HCT116 (cell line): ENCODE measurements at regions of chr7 and their contacts with region 1.

Region 1: GRCh38 chr7:31122649-31123058 is 70.5 kb downstream of the ADCYAP1R1 start:
- DNase-seq: peak; percentile 79
- ATAC-seq: peak; percentile 84
- H3K4me3 ChIP-seq: no peak overlapping the region
- H3K27ac ChIP-seq: no peak overlapping the region
- H3K4me1 ChIP-seq: 0 out of 4 replicates have a peak, but pooled peaks cover 0 to 4% of the 10 kb centered on the region in 2 experiments
- H3K27me3 ChIP-seq: peaks cover 22% of the 10 kb centered on the region
- CTCF ChIP-seq: peak; percentile 75 to 93 (median 84)
- POLR2A ChIP-seq: no peak
- RAD21 ChIP-seq: peak; percentile 92

Region 2: DNA sequence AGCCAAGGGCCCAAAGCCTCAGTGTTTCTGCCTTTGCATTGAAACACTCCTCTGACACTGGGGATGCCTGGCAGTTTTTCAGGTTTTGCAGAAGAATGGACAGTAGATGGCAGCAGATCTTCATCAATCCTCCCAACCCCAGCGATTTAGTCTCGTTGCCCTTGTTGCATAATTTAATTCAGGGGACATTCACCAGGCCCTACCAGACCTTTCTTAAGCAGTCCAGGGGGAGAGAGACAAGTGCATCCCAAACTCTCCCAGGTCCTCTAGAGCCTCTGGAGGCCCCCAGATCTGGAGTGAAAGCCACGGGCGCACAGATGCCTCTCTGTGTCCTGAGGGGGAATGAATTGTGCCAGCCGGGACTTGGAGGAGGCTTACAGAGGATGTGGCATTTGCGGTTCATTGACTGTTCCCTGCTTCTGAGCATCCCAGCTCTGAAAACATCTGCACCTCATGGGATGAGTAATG is 321.8 kb before region 1 on chr7:
- CTCF ChIA-PET with region 1: interaction called, 7 read pairs
- POLR2A ChIA-PET with region 1: interaction called, 3 read pairs
- RAD21 ChIA-PET with region 1: no interaction called
- intact Hi-C with region 1: loop called (anchors 2 kb)
- DNase-seq: peak; percentile 29
- ATAC-seq: peak; percentile 83
- H3K4me3 ChIP-seq: no peak overlapping the region
- H3K27ac ChIP-seq: no peak overlapping the region
- H3K4me1 ChIP-seq: peaks cover 0 to 12% of the 10 kb centered on the region in 2 experiments; a peak in 3 of 4 replicates
- H3K27me3 ChIP-seq: no peaks in the 10 kb centered on the region
- CTCF ChIP-seq: peak; percentile 66 to 77 (median 73)
- POLR2A ChIP-seq: no peak
- RAD21 ChIP-seq: peak; percentile 90

Region 3: DNA sequence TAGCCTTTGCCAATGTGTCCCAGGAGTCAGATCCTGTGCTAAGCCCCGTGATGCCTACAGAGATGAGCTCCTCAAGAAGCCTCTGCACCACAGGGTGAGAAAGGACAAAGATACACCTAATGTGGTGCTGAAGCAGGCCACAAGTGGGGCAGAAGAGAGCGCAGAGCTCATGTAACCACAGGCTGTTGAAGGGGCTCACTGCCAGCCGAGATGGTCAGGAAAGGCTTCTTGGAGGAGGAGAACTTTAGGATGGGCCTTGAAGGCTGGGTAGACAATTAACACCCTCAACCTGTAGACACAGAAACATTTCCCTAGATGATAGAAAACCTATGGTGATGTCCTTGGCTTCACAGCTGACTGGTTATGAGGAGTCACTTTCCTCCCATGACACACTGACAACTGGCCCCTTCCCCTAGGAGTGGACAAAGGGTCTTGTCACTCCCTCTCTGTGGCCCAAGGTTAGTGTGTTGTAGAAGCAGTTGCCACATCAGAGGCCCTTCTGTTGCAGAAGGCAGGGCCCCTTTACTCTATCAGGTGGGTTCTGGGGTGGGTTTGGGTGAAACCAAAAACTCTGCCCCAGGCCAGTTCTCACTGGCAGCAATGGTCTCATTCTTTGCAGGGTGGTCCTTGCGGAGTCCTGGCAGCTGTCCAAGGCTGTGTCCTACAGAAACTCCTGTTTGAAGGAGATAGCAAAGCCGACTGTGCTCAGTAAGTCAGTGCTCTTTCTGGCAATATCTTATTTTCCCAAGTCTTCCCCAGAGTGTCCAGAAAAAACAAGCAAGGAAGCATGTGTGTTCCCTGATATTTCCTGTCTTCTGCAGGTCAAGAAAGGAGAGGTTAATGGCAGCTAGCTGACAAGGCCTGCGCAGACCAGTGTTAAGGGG is 282.3 kb before region 1 on chr7:
- CTCF ChIA-PET with region 1: no interaction called
- POLR2A ChIA-PET with region 1: no interaction called
- RAD21 ChIA-PET with region 1: no interaction called
- intact Hi-C with region 1: no loop called
- DNase-seq: no peak
- ATAC-seq: no peak
- H3K4me3 ChIP-seq: no peak overlapping the region
- H3K27ac ChIP-seq: no peak overlapping the region
- H3K4me1 ChIP-seq: peaks cover 1% of the 10 kb centered on the region in 2 experiments; a peak in 3 of 4 replicates
- H3K27me3 ChIP-seq: no peaks in the 10 kb centered on the region
- CTCF ChIP-seq: no peak
- POLR2A ChIP-seq: no peak
- RAD21 ChIP-seq: no peak

Region 4: DNA sequence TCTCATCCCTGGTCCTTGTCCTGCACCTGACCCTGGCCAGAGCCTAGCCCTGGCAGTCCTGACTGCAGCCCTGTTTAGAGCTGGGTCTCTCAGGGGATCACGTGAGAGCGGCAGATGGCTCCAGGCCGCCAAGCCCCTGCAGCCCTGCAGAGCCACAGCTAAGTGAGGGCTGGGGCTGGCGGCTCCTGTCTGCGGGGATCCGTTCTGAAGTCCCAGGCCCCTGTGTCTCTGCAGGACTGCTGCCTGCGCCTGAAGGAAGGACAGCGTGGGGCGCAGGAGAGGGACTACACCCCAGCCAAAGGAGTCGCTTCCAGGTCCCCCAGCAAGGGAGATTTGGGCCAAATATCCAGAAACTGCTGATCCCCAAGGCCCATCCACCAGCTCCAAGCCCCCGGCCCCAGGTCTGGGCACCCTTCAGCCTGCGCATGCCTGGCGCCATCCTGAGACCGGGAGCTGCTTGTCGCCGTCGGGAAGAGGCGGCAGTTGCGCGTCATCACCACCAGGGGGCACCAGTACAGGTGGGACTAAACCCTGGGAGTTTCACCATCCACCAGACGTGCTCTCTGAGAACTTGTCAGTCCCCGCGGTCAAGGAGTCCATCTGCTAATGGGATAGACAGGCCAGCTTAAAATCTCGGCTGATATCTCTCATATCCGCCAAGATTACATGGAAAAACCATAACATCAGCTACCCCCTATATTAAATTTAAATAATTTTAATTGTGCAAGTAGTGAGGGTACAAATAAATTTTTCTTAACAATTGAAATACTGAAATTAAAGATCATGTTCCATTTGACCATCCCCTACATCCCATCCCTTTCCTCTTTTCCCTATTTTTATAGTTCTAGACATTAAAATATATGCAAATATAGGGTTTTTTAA is 184.0 kb before region 1 on chr7:
- CTCF ChIA-PET with region 1: interaction called, 36 read pairs
- POLR2A ChIA-PET with region 1: no interaction called
- RAD21 ChIA-PET with region 1: interaction called, 4 to 7 read pairs
- intact Hi-C with region 1: no loop called
- DNase-seq: peak; percentile 82
- ATAC-seq: peak; percentile 95
- H3K4me3 ChIP-seq: peak overlapping the region; percentile 19 to 46; a peak in 3 of 4 replicates
- H3K27ac ChIP-seq: no peak overlapping the region; the same call in 1 of the 2 replicates
- H3K4me1 ChIP-seq: peaks cover 3 to 12% of the 10 kb centered on the region in 2 experiments; a peak in 2 of 4 replicates
- H3K27me3 ChIP-seq: peaks cover 20% of the 10 kb centered on the region
- CTCF ChIP-seq: peak; percentile 87 to 94 (median 90)
- POLR2A ChIP-seq: no peak
- RAD21 ChIP-seq: peak; percentile 68

Region 5: GRCh38 chr7:30983042-30983913 is 139.4 kb before region 1 on chr7:
- CTCF ChIA-PET with region 1: interaction called, 482 read pairs
- POLR2A ChIA-PET with region 1: interaction called, 21 read pairs
- RAD21 ChIA-PET with region 1: interaction called, 50 to 64 read pairs
- intact Hi-C with region 1: loop called (anchors 1 kb)
- DNase-seq: peak; percentile 70
- ATAC-seq: peak; percentile 98
- H3K4me3 ChIP-seq: no peak overlapping the region
- H3K27ac ChIP-seq: no peak overlapping the region
- H3K4me1 ChIP-seq: peaks cover 7 to 10% of the 10 kb centered on the region in 2 experiments; a peak in 3 of 4 replicates
- H3K27me3 ChIP-seq: peaks cover 14% of the 10 kb centered on the region
- CTCF ChIP-seq: peak; percentile 82 to 95 (median 90)
- POLR2A ChIP-seq: no peak
- RAD21 ChIP-seq: peak; percentile 94

Region 6: DNA sequence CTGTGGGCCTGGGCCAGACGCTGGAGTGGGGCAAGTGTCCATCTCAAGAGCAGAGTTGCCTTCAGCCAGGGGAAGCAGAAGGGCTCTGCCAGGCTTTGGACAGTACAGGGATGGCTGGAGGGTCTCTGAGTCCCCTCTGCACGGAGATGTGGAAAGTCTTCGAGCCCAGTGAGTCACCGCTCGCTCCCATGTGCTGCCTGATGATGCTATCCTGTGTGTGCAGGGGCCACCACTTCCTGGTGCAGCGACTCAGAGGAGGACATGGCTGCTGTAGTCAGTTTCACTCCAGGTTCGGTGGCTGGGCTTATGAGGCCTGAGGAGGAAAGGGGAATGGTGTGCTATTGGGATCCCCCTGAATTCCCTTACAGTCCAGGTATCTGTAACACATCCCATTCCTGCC is 64.5 kb before region 1 on chr7:
- CTCF ChIA-PET with region 1: interaction called, 21 read pairs
- POLR2A ChIA-PET with region 1: no interaction called
- RAD21 ChIA-PET with region 1: no interaction called
- intact Hi-C with region 1: loop called (anchors 1 kb)
- DNase-seq: no peak
- ATAC-seq: no peak
- H3K4me3 ChIP-seq: no peak overlapping the region
- H3K27ac ChIP-seq: no peak overlapping the region
- H3K4me1 ChIP-seq: no peaks in the 10 kb centered on the region; a peak in 2 of 4 replicates
- H3K27me3 ChIP-seq: no peaks in the 10 kb centered on the region
- CTCF ChIP-seq: no peak
- POLR2A ChIP-seq: no peak
- RAD21 ChIP-seq: no peak

Region 7: DNA sequence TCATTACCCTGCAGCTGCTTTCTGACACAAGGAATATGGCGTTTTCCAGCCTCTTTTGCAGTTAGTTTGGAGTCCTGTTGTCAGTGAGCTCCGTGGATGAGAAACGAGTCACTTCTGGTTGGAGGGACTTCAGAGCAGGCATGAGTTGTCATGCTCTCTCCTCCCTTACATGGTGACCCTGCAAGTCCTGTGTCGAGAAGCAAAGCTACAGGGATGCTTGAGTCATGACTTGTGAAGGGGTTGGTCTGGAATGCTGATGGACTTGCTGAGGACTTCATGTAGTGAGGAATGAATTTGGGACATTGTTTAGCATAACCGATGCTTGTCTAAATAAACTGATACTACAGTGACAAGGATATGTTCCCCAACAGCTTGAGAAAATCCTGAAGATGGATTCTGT is 38.3 kb after region 1 on chr7:
- CTCF ChIA-PET with region 1: no interaction called
- POLR2A ChIA-PET with region 1: no interaction called
- RAD21 ChIA-PET with region 1: no interaction called
- intact Hi-C with region 1: no loop called
- DNase-seq: no peak
- ATAC-seq: no peak
- H3K4me3 ChIP-seq: no peak overlapping the region
- H3K27ac ChIP-seq: no peak overlapping the region
- H3K4me1 ChIP-seq: no peaks in the 10 kb centered on the region
- H3K27me3 ChIP-seq: peaks cover 26% of the 10 kb centered on the region
- CTCF ChIP-seq: no peak
- POLR2A ChIP-seq: no peak
- RAD21 ChIP-seq: no peak

Region 8: DNA sequence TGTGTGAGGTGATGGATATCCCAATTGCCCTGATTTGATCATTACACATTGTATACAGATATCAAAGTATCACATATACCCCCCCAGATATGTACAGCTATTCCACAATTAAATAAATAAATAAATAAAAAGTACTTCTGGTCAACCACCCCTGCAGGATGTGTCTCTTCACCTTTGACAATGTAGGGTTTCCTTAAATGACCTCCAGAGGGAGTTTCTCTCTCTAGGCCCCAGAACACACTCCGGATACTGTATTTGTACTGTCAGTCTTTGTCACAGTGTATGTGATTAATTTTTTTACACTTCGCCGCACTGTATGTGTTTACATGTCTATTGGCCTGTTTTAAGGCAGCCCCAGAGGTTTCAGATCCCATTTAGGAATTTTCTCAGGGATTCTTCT is 53.0 kb after region 1 on chr7:
- CTCF ChIA-PET with region 1: no interaction called
- POLR2A ChIA-PET with region 1: no interaction called
- RAD21 ChIA-PET with region 1: no interaction called
- intact Hi-C with region 1: no loop called
- DNase-seq: no peak
- ATAC-seq: peak; percentile 69
- H3K4me3 ChIP-seq: no peak overlapping the region
- H3K27ac ChIP-seq: no peak overlapping the region
- H3K4me1 ChIP-seq: no peaks in the 10 kb centered on the region
- H3K27me3 ChIP-seq: peaks cover 33% of the 10 kb centered on the region
- CTCF ChIP-seq: peak; percentile 6 to 36 (median 17); a peak in 2 of 6 replicates
- POLR2A ChIP-seq: no peak
- RAD21 ChIP-seq: no peak